Caco-2 (cell line): ENCODE measurements at regions of chr4 and their contacts with region 1.

Region 1: GRCh38 chr4:46581677-46582076 is 191.7 kb upstream of the GABRA2 start:
- DNase-seq: no peak
- H3K4me3 ChIP-seq: no peak overlapping the region
- H3K4me3 Mint-ChIP-seq: no peak overlapping the region
- H3K27ac Mint-ChIP-seq: no peak overlapping the region
- H3K4me1 ChIP-seq: no peaks in the 10 kb centered on the region; the same call in 1 of the 2 replicates
- H3K4me1 Mint-ChIP-seq: no peaks in the 10 kb centered on the region
- H3K27me3 ChIP-seq: no peaks in the 10 kb centered on the region
- H3K27me3 Mint-ChIP-seq: no peaks in the 10 kb centered on the region
- CTCF ChIP-seq: no peak

Region 2: DNA sequence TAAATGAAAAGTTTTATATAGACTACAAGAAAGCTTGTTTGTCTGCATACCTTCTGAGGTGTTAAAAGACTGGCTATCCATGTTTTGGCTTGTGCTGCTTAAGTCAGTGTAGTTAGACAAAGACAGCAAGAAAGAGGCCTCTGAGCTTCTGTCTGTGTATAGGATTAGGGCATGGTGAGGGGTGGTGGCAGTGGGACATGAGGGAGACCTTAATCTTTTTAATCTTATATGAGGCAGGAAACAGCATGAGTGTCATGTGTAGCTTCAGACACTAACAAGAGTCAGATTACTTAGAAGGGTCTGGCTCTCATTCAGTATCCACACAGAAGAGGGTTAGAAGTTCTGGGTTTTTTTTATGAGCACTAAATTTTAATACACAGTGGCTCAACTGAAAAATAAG is 671.2 kb before region 1 on chr4:
- CTCF ChIA-PET with region 1: no interaction called
- POLR2A ChIA-PET with region 1: no interaction called
- intact Hi-C with region 1: no loop called
- DNase-seq: no peak
- H3K4me3 ChIP-seq: no peak overlapping the region
- H3K4me3 Mint-ChIP-seq: no peak overlapping the region
- H3K27ac Mint-ChIP-seq: no peak overlapping the region
- H3K4me1 ChIP-seq: no peaks in the 10 kb centered on the region
- H3K4me1 Mint-ChIP-seq: no peaks in the 10 kb centered on the region
- H3K27me3 ChIP-seq: no peaks in the 10 kb centered on the region
- H3K27me3 Mint-ChIP-seq: no peaks in the 10 kb centered on the region
- CTCF ChIP-seq: no peak

Region 3: GRCh38 chr4:46549125-46549524 is 32.6 kb before region 1 on chr4:
- CTCF ChIA-PET with region 1: no interaction called
- POLR2A ChIA-PET with region 1: no interaction called
- intact Hi-C with region 1: loop called (anchors 1 kb)
- DNase-seq: no peak
- H3K4me3 ChIP-seq: no peak overlapping the region
- H3K4me3 Mint-ChIP-seq: no peak overlapping the region
- H3K27ac Mint-ChIP-seq: no peak overlapping the region
- H3K4me1 ChIP-seq: peaks cover 16% of the 10 kb centered on the region; the same call in 1 of the 2 replicates
- H3K4me1 Mint-ChIP-seq: peaks cover 10% of the 10 kb centered on the region
- H3K27me3 ChIP-seq: no peaks in the 10 kb centered on the region
- H3K27me3 Mint-ChIP-seq: no peaks in the 10 kb centered on the region
- CTCF ChIP-seq: no peak